ENCODE measurements at regions of chr18 and their contacts with region 1.

Region 1: GRCh38 chr18:63138436-63139340 is 180.9 kb downstream of the BCL2 start:
- DNase-seq: no peak
- ATAC-seq: peak; percentile 34
- H3K4me3 Mint-ChIP-seq: peak overlapping the region; percentile 71
- H3K27ac Mint-ChIP-seq: peak overlapping the region; percentile 91
- H3K4me1 Mint-ChIP-seq: peaks cover 60% of the 10 kb centered on the region
- H3K27me3 Mint-ChIP-seq: no peaks in the 10 kb centered on the region

Region 2: DNA sequence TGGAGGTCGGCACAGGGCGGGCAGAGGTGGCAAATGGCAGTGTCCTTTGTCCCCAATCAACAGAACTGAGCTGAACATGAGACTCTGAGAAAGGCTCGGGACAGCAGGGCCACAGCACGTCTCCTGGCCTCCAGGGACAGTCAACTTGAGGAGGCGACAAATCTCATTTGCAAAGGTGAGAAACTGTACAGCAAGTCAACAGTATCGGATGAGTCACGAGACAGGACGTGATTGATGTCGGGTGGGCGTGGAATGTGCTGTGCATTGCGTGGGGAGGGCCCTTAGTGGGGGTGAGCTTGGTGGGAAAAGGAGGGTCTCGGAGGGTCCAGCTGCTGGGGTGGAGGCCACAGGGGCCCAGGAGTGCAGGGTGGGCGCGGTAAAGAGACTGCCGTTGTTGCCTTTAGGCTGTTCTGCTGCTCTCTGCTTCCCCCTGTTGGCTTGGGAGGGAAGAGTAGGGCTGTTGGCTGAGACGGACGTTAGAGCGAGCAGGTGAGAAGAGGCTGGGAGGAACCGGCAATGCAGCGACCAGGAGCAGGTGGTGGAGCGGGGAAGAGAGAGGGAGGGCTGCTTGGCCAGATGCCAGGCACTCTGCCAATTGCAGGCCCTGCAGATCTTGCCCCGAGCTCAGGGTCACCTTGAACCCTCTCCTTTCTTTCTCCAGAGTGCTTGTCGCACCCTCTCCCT is 16.6 kb after region 1 on chr18:
- CTCF ChIA-PET with region 1: interaction called, 17 read pairs
- DNase-seq: peak; percentile 88
- ATAC-seq: peak; percentile 81
- H3K4me3 Mint-ChIP-seq: peak overlapping the region; percentile 76
- H3K27ac Mint-ChIP-seq: peak overlapping the region; percentile 90
- H3K4me1 Mint-ChIP-seq: peaks cover 96% of the 10 kb centered on the region
- H3K27me3 Mint-ChIP-seq: no peaks in the 10 kb centered on the region

Region 3: DNA sequence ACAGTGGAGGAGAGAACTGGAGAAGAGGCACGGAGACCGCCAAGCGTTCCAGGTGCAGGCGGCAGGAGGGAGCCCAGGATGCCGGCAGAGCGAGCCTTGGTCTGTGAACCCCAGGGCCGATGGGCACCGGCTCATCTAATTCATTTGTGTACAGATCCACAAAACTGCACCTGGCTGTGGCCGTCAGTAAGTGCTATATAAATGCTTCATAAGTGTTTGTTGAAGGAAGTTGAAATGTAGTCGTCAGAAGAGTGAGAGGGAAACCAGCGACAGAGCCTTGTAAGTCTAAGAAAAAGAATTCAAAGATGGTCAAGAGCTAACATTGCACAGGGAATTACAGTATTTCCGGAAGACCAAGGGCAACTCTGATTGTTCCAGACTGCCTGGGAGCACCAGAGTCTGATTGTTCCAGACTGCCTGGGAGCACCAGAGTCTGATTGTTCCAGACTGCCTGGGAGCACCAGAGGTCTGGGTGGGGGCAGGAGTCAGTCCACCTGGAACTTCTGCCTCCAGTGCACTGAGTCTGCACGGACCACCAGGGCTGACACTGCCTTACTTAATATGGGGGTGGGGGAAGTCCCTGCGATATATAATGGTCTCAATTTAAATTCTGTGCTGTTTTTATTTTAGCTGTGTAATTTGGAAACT is 68.6 kb after region 1 on chr18:
- CTCF ChIA-PET with region 1: no interaction called
- DNase-seq: no peak
- ATAC-seq: peak; percentile 6
- H3K4me3 Mint-ChIP-seq: peak overlapping the region; percentile 85
- H3K27ac Mint-ChIP-seq: peak overlapping the region; percentile 91
- H3K4me1 Mint-ChIP-seq: peaks cover 95% of the 10 kb centered on the region
- H3K27me3 Mint-ChIP-seq: no peaks in the 10 kb centered on the region

Region 4: DNA sequence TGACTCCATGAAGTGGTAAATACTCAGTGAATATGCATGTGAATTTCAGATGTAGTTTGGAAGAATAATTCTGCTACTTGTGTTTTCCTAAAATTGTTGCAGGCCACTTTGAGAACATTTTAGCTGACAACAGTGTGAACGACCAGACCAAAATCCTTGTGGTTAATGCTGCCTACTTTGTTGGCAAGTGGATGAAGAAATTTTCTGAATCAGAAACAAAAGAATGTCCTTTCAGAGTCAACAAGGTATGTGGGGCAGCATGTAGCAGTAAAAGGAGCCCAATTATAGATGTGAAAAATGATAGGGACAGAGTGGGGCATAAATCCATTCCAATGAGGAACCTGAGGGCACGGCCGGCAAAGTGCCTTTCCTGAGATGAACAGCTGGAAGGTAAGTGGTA is 354.2 kb after region 1 on chr18:
- CTCF ChIA-PET with region 1: no interaction called
- DNase-seq: no peak
- ATAC-seq: no peak
- H3K4me3 Mint-ChIP-seq: no peak overlapping the region
- H3K27ac Mint-ChIP-seq: no peak overlapping the region
- H3K4me1 Mint-ChIP-seq: no peaks in the 10 kb centered on the region
- H3K27me3 Mint-ChIP-seq: peaks cover 32% of the 10 kb centered on the region